Vagina (tissue), 2 donors: ENCODE measurements at regions of chr21 and their contacts with region 1.

Region 1: GRCh38 chr21:44817506-44817880 is 369 bp downstream of the SUMO3 start:
- DNase-seq: no peak
- H3K4me3 ChIP-seq: peak overlapping the region; percentile 85 to 94
- H3K27ac ChIP-seq: peak overlapping the region; percentile 94
- H3K4me1 ChIP-seq: peaks cover 39% of the 10 kb centered on the region
- H3K27me3 ChIP-seq: no peaks in the 10 kb centered on the region
- CTCF ChIP-seq: no peak
- POLR2A ChIP-seq: no peak

Region 2: DNA sequence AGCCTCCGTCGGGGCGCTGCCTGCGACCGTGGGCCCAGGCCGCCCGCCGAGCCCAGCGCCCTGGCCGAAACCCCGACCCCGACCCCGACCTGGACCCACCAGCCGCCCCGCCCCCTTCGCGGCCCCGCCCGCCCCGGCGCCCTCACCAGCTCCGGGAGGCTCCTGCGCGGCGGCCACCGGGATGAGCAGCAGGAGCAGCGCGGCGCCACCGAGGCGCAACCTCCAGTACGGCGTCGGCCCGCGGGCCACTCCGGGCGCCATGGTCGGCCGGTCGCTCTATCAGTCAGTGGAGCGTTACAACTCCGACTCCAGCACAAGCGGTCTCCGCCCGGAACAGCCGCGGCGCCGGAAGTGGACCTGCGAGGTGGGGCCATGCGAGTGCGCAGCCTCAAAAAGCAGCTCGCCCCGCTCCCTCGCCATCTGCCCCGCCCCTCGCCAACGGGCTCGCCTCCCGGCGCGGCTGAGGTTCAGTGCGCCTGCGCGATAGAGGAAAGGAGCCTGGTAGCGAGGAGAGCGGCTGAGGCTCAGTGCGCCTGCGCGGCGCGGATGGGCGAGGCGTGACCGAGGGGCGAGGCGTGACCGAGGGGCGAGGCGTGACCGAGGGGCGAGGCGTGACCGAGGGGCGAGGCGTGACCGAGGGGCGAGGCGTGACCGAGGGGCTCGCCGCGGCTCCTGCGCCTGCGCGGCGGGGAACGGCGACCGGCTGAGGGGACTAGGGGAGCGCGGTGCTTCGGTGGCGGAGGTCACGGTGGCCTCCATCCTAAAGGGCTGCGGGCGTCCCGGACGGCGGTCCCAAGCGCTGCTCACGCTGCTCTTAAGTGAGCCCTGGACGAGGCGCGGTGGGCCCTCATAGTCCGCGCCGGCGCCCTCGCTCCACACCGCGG is 56.1 kb after region 1 on chr21 and contains the start of gene PTTG1IP:
- intact Hi-C with region 1: loop called (anchors 5 kb)
- DNase-seq: peak in 1 of 2 donors; percentile 95
- H3K4me3 ChIP-seq: peak within 1 kb of the TSS; percentile 79 to 88
- H3K27ac ChIP-seq: peak within 1 kb of the TSS; percentile 90
- H3K4me1 ChIP-seq: peaks cover 62% of the 10 kb centered on the region
- H3K27me3 ChIP-seq: no peaks in the 10 kb centered on the region
- CTCF ChIP-seq: no peak
- POLR2A ChIP-seq: peak; percentile 59 to 72
- total RNA-seq, gene PTTG1IP: 165 TPM